ENCODE measurements at regions of chr1 and their contacts with region 1.

Region 1: DNA sequence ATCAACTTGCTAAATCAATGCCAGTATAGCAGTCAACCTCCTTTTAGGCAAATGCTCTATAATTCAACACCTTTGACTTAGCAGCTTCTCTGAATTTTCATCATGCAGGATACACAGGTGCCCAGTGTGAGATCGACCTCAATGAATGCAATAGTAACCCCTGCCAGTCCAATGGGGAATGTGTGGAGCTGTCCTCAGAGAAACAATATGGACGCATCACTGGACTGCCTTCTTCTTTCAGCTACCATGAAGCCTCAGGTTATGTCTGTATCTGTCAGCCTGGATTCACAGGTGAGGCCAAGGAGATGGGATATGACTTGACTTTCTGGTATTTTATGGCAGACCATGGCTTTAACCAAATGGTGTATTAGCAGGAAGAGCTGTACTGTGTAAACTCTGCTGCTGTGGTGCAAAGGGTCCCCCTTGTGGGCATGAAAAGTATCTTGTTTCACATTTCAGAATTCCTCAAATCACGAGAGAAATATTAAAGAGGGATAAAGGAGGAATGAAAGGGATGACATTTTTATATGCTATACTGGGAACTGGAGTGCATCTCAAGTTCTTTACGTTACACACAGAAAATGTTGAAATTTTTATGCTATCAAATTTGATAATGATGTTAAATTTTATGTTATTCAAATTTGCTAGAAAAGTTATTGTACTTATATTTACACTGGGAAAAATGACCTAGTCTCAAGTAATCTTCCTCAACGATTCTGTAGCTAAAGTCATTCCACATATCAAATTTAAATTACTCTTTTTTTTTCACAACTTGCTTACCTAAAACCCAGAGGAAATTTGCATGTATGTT is 88.9 kb downstream of the CRB1 start:
- DNase-seq: peak in 3 of 5 donors; percentile 21 to 64 (median 51)
- H3K4me3 ChIP-seq: no peak overlapping the region
- H3K27ac ChIP-seq: no peak overlapping the region
- H3K4me1 ChIP-seq: no peaks in the 10 kb centered on the region
- H3K27me3 ChIP-seq: no peaks in the 10 kb centered on the region
- CTCF ChIP-seq: peak; percentile 43

Region 2: GRCh38 chr1:197156691-197157090 is 200.2 kb before region 1 on chr1:
- intact Hi-C with region 1: no loop called
- DNase-seq: no peak
- H3K4me3 ChIP-seq: no peak overlapping the region
- H3K27ac ChIP-seq: no peak overlapping the region
- H3K4me1 ChIP-seq: no peaks in the 10 kb centered on the region
- H3K27me3 ChIP-seq: no peaks in the 10 kb centered on the region
- CTCF ChIP-seq: no peak

Region 3: DNA sequence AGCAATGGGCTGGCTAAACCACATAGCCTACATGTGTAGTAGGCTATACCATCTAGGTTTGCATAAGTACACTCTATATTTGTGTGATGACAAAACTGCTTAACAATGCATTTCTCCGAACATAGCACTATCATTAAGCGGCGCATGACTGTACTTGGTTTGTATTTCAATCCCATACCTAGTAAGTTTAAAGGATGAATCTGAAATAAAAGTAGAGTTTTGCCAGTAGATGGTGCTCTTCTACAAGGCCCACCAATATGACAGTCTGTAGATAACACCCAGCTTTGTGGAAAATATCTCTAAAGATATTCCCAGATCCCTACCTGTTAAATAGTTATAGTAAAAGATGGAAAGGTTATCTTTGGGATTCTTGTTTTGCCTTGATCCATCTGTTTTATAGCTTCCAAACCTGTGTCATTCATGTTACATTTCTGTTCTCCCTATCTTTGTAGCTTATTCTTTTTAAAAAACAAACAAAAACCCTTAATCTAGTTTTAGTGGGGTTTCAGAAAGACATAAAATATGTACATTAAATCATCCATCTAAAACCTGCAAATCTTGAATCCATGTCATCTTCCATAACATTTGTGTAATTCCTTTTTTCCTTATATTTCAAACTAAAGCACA is 176.6 kb before region 1 on chr1:
- intact Hi-C with region 1: loop called (anchors 10 kb)
- DNase-seq: peak in 2 of 5 donors; percentile 45 to 58
- H3K4me3 ChIP-seq: no peak overlapping the region
- H3K27ac ChIP-seq: no peak overlapping the region
- H3K4me1 ChIP-seq: no peaks in the 10 kb centered on the region
- H3K27me3 ChIP-seq: no peaks in the 10 kb centered on the region
- CTCF ChIP-seq: peak; percentile 55

Region 4: GRCh38 chr1:197715806-197716205 is 358.9 kb after region 1 on chr1:
- intact Hi-C with region 1: no loop called
- DNase-seq: no peak
- H3K4me3 ChIP-seq: no peak overlapping the region
- H3K27ac ChIP-seq: no peak overlapping the region
- H3K4me1 ChIP-seq: no peaks in the 10 kb centered on the region
- H3K27me3 ChIP-seq: no peaks in the 10 kb centered on the region
- CTCF ChIP-seq: no peak

Measured in kidney (tissue), 22 donors.